Naive thymus-derived CD8-positive, alpha-beta T cell (primary cell): ENCODE measurements at regions of chr6 and their contacts with region 1.

Region 1: GRCh38 chr6:118893807-118894424 is at the start of gene ASF1A:
- DNase-seq: peak; percentile 93 to 97 (median 95)
- ATAC-seq: peak; percentile 73 to 74
- H3K4me3 Mint-ChIP-seq: peak within 1 kb of the TSS; percentile 90 to 99 (median 95)
- H3K27ac Mint-ChIP-seq: peak within 1 kb of the TSS; percentile 97 to 100 (median 99)
- H3K4me1 Mint-ChIP-seq: peaks cover 38 to 72% (median 62%) of the 10 kb centered on the region in 4 donors
- H3K27me3 Mint-ChIP-seq: peaks cover 0 to 1% (median 0%) of the 10 kb centered on the region in 5 donors
- polyA plus RNA-seq, gene ASF1A: 45.3 to 58.8 (median 47.7) TPM

Region 2: GRCh38 chr6:118787724-118788423 is 106.0 kb before region 1 on chr6:
- POLR2A ChIA-PET with region 1: interaction called, 12 read pairs
- DNase-seq: no peak
- ATAC-seq: peak; percentile 47 to 88
- H3K4me3 Mint-ChIP-seq: peak overlapping the region in 2 of 10 donors; percentile 4 to 7
- H3K27ac Mint-ChIP-seq: peak overlapping the region; percentile 27 to 92 (median 78)
- H3K4me1 Mint-ChIP-seq: peaks cover 9 to 32% (median 25%) of the 10 kb centered on the region in 4 donors
- H3K27me3 Mint-ChIP-seq: no peaks in the 10 kb centered on the region

Region 3: GRCh38 chr6:118800394-118801071 is 93.4 kb before region 1 on chr6:
- POLR2A ChIA-PET with region 1: interaction called, 25 read pairs
- DNase-seq: peak; percentile 51 to 93 (median 84)
- ATAC-seq: peak; percentile 90 to 94
- H3K4me3 Mint-ChIP-seq: peak overlapping the region; percentile 30 to 83 (median 66)
- H3K27ac Mint-ChIP-seq: peak overlapping the region; percentile 82 to 95 (median 90)
- H3K4me1 Mint-ChIP-seq: peaks cover 15 to 44% (median 41%) of the 10 kb centered on the region in 4 donors
- H3K27me3 Mint-ChIP-seq: no peaks in the 10 kb centered on the region

Region 4: DNA sequence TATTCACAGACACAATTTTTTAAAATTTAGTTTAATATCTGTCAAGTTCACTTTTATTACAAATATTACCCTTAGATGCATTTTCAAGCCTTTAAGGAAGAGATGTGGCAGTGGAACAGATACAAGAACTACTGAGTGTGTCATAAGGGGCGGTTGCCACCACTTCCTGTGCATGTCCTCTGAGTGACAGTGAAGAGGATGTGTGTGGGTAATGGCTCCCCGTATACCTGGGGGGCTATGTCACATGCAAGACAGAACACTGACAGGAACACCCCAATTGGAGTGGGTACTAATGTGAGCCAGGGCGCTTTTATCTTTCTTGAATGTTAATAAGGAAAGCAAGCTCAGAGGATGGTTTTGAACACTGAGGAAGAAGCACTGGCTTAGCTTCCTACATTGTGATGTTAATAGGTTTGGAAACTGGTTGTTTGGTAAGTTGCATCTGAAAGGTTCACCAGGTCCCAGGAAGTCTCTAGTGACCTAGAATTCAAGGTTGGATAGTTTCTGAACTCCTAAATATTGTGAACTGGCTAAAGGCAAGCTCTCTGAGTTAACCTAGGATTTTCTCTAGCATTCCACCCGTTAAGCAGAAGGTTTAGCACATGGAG is 83.4 kb before region 1 on chr6:
- POLR2A ChIA-PET with region 1: interaction called, 46 read pairs
- DNase-seq: peak; percentile 17 to 87 (median 66)
- ATAC-seq: peak; percentile 94 to 98
- H3K4me3 Mint-ChIP-seq: peak overlapping the region; percentile 53 to 82 (median 76)
- H3K27ac Mint-ChIP-seq: peak overlapping the region; percentile 90 to 97 (median 95)
- H3K4me1 Mint-ChIP-seq: peaks cover 25 to 56% (median 45%) of the 10 kb centered on the region in 4 donors
- H3K27me3 Mint-ChIP-seq: no peaks in the 10 kb centered on the region

Region 5: GRCh38 chr6:118864341-118865099 is 29.4 kb before region 1 on chr6:
- POLR2A ChIA-PET with region 1: interaction called, 17 read pairs
- DNase-seq: peak in 1 of 10 donors; percentile 7
- ATAC-seq: peak; percentile 67 to 74
- H3K4me3 Mint-ChIP-seq: peak overlapping the region; percentile 50 to 88 (median 77)
- H3K27ac Mint-ChIP-seq: peak overlapping the region; percentile 25 to 92 (median 88)
- H3K4me1 Mint-ChIP-seq: peaks cover 34 to 57% (median 52%) of the 10 kb centered on the region in 4 donors
- H3K27me3 Mint-ChIP-seq: no peaks in the 10 kb centered on the region

Region 6: GRCh38 chr6:118881440-118882313 is 12.2 kb before region 1 on chr6:
- POLR2A ChIA-PET with region 1: interaction called, 39 read pairs
- DNase-seq: no peak
- ATAC-seq: peak in 1 of 2 donors; percentile 49
- H3K4me3 Mint-ChIP-seq: peak overlapping the region in 8 of 10 donors; percentile 0 to 67 (median 43)
- H3K27ac Mint-ChIP-seq: peak overlapping the region in 8 of 10 donors; percentile 10 to 83 (median 42)
- H3K4me1 Mint-ChIP-seq: peaks cover 32 to 86% (median 70%) of the 10 kb centered on the region in 4 donors
- H3K27me3 Mint-ChIP-seq: no peaks in the 10 kb centered on the region

Region 7: GRCh38 chr6:118934461-118935330 is 40.8 kb after region 1 on chr6 and contains the start of gene MCM9:
- POLR2A ChIA-PET with region 1: interaction called, 51 read pairs
- DNase-seq: peak; percentile 75 to 95 (median 86)
- ATAC-seq: peak; percentile 88 to 91
- H3K4me3 Mint-ChIP-seq: peak within 1 kb of the TSS; percentile 86 to 93 (median 90)
- H3K27ac Mint-ChIP-seq: peak within 1 kb of the TSS; percentile 78 to 95 (median 91)
- H3K4me1 Mint-ChIP-seq: peaks cover 15 to 55% (median 33%) of the 10 kb centered on the region in 4 donors
- H3K27me3 Mint-ChIP-seq: no peaks in the 10 kb centered on the region
- polyA plus RNA-seq, gene MCM9: 9.3 to 12.2 (median 10.7) TPM